GM13977 (cell line): ENCODE measurements at regions of chr11 and their contacts with region 1.

Region 1: GRCh38 chr11:94623120-94623735 is 56.1 kb downstream of the PIWIL4 start:
- DNase-seq: peak; percentile 56
- CTCF ChIP-seq: peak; percentile 75

Region 2: DNA sequence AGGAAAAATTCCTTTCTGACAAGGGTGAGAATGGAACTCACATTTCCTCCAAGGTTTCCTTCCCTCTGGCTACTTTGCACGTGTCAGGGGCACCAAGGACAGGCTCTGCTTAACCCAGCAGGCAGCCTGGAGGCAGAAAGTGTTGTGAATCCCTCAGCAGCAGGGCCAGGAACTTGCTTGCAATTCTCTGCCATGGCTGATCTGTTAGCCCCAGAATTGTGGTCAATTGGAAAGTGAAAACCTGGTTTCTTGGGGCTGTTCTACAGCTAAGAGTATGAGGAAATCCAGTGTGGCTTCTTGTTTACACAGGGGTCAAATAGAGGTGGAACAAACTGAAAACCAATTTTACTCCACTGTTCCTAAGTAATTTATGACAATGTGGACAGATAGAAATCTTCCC is 1000.0 kb before region 1 on chr11:
- in situ Hi-C with region 1: no loop called
- DNase-seq: peak; percentile 9
- CTCF ChIP-seq: no peak

Region 3: GRCh38 chr11:95138448-95138847 is 515.2 kb after region 1 on chr11:
- in situ Hi-C with region 1: loop called (anchors 25 kb)
- DNase-seq: peak; percentile 37
- CTCF ChIP-seq: peak; percentile 60

Region 4: DNA sequence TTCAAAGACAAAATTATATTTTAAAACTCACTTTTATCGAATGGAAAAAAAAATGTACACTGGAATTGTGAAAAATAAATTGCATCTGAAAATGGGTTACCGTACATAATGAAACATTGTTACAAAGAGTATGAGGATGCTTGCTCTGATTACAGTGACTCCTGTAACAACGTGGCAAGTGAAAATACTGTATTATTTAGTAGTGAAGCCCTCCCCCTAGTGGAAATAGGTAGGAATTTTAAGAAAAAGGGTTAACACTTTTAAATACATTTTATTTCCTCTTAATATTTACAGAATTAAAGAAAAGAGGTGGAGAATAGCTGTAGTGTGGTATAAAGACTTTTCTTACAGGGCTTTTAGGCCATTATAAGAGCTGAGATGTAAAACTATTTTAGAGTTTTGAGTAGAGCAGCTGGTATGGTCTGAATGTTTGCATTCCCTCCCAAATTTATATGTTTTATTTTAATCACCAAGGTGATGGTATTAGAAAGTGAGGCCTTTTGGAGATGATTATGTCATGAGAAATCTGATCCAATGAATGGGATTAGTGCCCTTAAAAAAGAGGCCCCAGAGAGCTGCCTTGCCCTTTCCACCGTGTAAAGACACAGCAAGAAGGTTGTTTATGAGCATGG is 1141.2 kb after region 1 on chr11:
- in situ Hi-C with region 1: loop called (anchors 25 kb)
- DNase-seq: peak; percentile 54
- CTCF ChIP-seq: peak; percentile 48